GM13977 (cell line): ENCODE measurements at regions of chr14 and their contacts with region 1.

Region 1: GRCh38 chr14:59897761-59898383 is 22.1 kb upstream of the LRRC9 start:
- DNase-seq: peak; percentile 22
- CTCF ChIP-seq: peak; percentile 56

Region 2: DNA sequence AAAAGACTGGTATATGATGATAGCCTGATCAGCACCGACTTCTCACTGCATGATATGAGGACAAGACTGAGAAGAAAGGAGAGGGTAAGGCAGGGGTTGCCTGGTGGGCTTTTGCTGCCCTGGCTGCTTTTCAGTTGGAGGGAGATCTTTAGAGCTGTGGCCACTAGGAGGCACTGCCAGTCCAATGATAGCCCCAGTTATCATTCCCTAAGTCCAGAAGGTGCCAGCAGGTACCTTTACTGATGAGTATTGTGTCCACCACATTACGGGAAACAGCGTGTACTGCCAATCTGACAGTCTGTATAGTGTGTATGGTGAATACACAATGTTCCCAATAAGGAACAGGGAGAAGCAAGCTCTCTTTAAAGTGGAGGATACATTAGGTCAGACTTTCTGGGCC is 265.5 kb before region 1 on chr14:
- in situ Hi-C with region 1: loop called (anchors 25 kb)
- DNase-seq: peak; percentile 64
- CTCF ChIP-seq: peak; percentile 77

Region 3: DNA sequence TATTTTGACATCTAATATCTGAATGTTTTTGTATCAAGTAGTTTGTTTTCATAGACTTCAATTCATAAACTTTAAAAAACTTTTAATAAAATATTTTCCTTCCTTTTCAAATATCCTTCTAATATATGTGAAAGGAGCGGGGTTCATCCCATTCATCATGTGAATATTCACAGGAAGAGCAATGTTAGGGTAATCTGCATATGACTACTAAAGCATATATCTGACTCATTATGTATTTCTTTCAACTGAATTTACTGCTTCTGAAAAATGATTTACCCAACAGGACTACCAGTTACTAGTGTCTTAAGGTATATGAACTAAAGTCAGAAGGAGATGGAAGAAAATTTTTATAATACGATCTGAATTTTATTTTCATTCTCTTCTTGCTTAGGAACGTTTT is 236.8 kb after region 1 on chr14:
- in situ Hi-C with region 1: no loop called
- DNase-seq: no peak
- CTCF ChIP-seq: no peak

Region 4: GRCh38 chr14:60166142-60166541 is 268.3 kb after region 1 on chr14:
- in situ Hi-C with region 1: no loop called
- DNase-seq: no peak
- CTCF ChIP-seq: no peak